Activated B cell treated with CpG ODN at 0.5 μM for 24 hours (primary cell): ENCODE measurements at regions of chr11 and their contacts with region 1.

Region 1: DNA sequence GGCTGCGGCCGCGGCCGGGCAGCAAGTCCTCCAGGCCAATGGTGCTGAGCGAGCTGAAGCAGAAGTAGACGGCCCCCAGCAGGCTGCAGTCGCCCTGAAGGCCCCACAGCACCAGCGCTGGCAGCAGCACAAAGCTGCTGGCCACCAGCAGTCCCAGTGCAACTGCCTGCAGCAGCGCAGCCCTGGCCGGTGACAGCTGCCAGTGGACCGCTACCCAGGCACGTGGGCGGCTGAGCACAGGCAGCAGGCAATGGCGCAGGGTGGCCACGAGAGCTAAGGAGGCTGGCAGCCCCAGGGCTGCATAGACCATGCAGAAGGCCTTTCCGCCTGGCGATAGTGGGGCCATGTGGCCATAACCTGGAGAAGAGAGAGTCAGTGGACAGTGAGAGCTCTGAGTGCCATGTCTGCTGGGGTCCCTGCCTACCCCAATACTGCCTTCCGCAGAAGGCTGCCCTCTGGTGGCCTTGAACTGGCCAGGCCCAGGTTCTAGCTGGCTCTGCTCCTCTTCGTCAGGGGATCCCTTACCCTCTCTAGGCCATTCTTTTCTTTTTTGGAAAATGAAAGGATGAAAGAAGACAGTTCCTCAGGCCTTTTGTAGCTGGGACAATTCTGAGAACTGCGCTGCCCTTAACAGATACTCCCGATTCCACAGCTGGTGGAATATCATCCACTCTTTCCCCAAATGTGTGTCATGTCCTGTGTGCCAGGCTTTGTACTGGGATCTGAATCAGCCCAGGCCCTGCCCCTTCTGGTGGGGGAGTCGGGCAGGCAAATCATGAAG is 1.9 kb downstream of the KCNK7 start:
- DNase-seq: no peak
- ATAC-seq: peak; percentile 41
- H3K4me3 Mint-ChIP-seq: no peak overlapping the region
- H3K27ac Mint-ChIP-seq: no peak overlapping the region
- H3K4me1 Mint-ChIP-seq: peaks cover 24% of the 10 kb centered on the region
- H3K27me3 Mint-ChIP-seq: no peaks in the 10 kb centered on the region
- CTCF ChIP-seq: peak; percentile 37

Region 2: DNA sequence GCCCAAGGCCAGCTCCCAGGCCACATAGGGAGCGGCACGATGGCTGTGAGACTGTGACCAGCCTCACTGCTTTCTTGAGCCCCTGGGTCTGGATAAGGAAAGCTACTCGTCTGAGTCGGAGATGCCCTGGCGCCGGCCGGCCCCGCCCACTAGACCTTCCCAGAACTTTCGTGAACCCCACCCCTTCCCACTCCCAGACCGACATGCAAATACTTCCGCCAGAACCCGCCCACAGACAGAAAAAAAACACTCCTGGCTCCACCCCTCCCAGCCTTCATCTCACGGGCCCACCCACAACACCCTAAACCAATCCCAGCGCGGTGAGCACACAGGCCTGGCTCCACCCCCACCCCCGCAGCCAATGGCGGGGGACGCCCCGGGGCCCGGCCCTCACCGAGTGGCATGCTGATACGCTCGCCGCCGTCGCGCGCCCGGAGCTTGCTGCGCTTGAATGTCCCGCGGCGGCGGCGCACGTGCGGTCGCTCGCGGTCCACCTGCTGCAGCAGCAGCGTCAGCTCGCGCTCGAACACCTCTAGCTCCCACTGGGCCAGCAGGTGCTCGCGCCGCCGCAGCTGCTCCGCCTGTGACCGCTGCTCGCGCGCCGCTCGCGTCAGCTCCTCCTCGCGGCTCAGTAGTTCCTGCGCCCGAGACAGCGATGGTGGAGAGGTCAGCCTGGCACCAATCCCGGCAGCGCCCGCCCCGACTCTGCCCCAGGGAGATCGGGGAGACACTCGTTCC is 13.3 kb after region 1 on chr11:
- CTCF ChIA-PET with region 1: interaction called, 10 read pairs
- POLR2A ChIA-PET with region 1: interaction called, 8 read pairs
- intact Hi-C with region 1: no loop called
- DNase-seq: no peak
- ATAC-seq: peak; percentile 34
- H3K4me3 Mint-ChIP-seq: no peak overlapping the region
- H3K27ac Mint-ChIP-seq: no peak overlapping the region
- H3K4me1 Mint-ChIP-seq: peaks cover 49% of the 10 kb centered on the region
- H3K27me3 Mint-ChIP-seq: no peaks in the 10 kb centered on the region
- CTCF ChIP-seq: no peak